GM10248 (cell line): ENCODE measurements at regions of chr1 and their contacts with region 1.

Region 1: GRCh38 chr1:235093696-235094592 is 34.7 kb downstream of the TOMM20 start:
- DNase-seq: peak; percentile 84
- CTCF ChIP-seq: peak; percentile 92

Region 2: DNA sequence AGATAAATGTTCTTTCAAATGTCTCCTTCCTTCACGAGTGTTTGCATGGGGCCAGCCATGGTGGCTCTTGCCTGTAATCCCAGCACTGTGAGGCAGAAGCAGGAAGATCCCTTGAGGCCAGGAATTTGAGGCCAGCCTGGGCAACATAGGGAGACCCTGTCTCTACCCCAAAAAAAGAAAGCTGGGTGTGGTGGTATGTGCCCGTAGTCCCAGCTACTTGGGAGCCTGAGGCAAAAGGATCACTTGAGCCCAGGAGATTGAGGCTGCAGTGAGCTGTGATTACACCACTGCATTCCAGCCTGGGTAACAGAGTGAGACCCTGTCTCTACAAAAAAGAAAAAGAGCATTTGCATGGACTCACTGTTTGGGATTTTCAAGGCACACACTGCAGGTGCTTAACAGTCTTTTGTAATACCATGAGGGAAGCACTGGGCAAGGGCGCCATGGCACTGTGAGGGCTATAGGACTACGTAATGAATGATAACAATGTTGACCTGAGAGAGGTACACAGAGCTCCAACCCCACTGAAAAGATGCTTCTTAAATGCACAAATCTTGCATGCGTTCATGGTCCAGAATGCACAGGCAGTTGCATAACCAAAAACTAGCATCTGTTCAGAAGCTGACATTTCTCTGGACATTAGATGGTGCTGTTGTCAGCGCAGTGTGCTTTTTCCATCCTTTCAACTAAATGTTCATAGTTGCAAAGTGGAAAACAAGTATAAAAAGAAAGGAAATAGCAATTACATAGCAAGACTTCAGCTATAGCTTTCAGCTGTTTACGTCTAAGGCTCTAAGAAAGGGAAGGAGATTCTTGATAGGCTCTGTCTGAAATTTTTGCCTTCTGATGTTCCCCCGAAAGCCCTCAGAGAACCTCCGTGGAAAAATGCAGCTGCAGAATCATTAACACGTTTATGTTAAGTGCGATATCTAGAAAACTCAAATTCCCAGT is 607.2 kb before region 1 on chr1:
- CTCF ChIA-PET with region 1: interaction called, 10 read pairs
- POLR2A ChIA-PET with region 1: no interaction called
- DNase-seq: no peak
- CTCF ChIP-seq: peak; percentile 66

Region 3: GRCh38 chr1:235105051-235106043 is 11.4 kb after region 1 on chr1:
- CTCF ChIA-PET with region 1: interaction called, 16 read pairs
- POLR2A ChIA-PET with region 1: interaction called, 10 read pairs
- DNase-seq: peak; percentile 74
- CTCF ChIP-seq: no peak

Region 4: GRCh38 chr1:235206533-235207208 is 112.7 kb after region 1 on chr1:
- CTCF ChIA-PET with region 1: no interaction called
- POLR2A ChIA-PET with region 1: no interaction called
- DNase-seq: no peak
- CTCF ChIP-seq: no peak